Dendritic cell treated with granulocyte-macrophage colony-stimulating factor and Interleukin-4, amounts not matched to agents 40 ng/mL and 50 ng/mL, for 4 days (primary cell): ENCODE measurements at regions of chr9 and their contacts with region 1.

Region 1: DNA sequence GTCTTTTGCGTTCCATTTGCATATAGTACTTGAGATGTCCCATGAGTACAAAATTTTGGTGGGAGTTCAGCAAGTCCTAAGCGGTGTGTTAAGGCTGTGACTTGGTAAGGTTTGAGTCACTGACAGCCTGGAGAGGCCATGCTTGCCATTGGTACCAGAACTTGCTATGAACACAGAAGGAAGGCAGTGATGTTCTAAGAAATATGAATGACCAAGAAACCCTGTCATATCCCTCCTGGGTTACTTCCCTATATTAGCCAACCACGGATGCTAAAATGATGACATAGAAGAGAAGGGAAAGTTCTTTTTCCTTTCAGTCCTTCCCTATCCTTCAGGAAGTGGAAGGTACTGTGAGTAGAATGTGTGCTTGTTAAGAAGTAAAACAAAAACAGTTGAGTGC is 136.7 kb downstream of the GCNT1 start:
- H3K4me3 Mint-ChIP-seq: no peak overlapping the region
- H3K27ac Mint-ChIP-seq: peak overlapping the region; percentile 63
- H3K4me1 Mint-ChIP-seq: peaks cover 47% of the 10 kb centered on the region
- H3K27me3 Mint-ChIP-seq: no peaks in the 10 kb centered on the region

Region 2: GRCh38 chr9:76562511-76562911 is 33.1 kb before region 1 on chr9:
- intact Hi-C with region 1: loop called (anchors 5 kb)
- H3K4me3 Mint-ChIP-seq: peak overlapping the region; percentile 45
- H3K27ac Mint-ChIP-seq: peak overlapping the region; percentile 79
- H3K4me1 Mint-ChIP-seq: peaks cover 69% of the 10 kb centered on the region
- H3K27me3 Mint-ChIP-seq: no peaks in the 10 kb centered on the region

Region 3: DNA sequence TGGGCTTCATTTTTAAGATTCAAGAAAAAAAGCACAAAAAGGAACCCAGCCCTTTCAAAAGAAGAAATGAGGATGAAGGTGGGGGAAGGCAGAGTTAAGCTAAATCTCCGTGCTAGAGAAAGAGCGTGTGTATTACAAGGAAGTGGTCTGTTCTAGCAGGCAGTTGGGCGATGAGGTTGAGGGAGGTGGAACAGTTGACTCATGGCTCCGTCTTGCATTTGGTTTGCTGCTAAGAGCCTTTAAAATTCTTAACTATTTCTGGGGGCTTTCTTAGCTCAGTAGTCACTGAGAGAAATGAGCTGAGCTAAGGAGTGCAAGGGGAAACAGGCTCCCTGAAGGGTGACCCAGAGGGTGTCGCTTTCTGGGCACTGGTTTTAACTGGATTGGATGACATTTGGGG is 19.3 kb before region 1 on chr9:
- intact Hi-C with region 1: loop called (anchors 1 kb)
- H3K4me3 Mint-ChIP-seq: no peak overlapping the region
- H3K27ac Mint-ChIP-seq: peak overlapping the region; percentile 90
- H3K4me1 Mint-ChIP-seq: peaks cover 83% of the 10 kb centered on the region
- H3K27me3 Mint-ChIP-seq: no peaks in the 10 kb centered on the region

Region 4: DNA sequence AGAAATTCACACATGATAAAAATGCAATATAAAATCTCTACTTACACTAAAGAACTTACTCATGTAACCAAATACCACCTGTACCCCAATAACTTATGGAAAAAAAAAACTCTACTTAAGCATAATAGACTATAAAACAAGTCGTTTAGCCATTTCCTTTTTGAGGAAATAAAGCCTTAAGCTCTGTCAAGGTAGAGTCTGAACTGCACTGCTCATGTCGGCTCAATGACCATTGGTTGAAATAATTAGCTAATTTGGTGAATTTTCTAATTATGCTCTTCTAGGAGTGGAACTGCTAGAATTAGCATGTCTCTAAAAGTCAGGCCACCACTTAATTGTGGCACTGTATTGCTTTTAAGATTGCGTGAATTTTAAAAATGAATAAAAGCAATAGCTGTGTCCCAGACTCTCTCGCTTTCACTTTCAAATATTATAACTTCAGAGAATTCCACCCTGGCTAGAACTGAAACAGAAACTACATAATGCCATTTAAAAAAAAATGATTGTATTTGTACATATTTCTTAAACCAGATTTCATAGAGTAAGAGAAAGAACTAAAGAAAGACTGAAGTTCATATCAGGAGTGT is 55.6 kb after region 1 on chr9:
- intact Hi-C with region 1: loop called (anchors 5 kb)
- H3K4me3 Mint-ChIP-seq: peak overlapping the region; percentile 65
- H3K27ac Mint-ChIP-seq: peak overlapping the region; percentile 87
- H3K4me1 Mint-ChIP-seq: peaks cover 60% of the 10 kb centered on the region
- H3K27me3 Mint-ChIP-seq: no peaks in the 10 kb centered on the region

Region 5: GRCh38 chr9:76704593-76705204 is 109.1 kb after region 1 on chr9:
- intact Hi-C with region 1: no loop called
- H3K4me3 Mint-ChIP-seq: no peak overlapping the region
- H3K27ac Mint-ChIP-seq: no peak overlapping the region
- H3K4me1 Mint-ChIP-seq: peaks cover 5% of the 10 kb centered on the region
- H3K27me3 Mint-ChIP-seq: peaks cover 25% of the 10 kb centered on the region